K562 (cell line): ENCODE measurements at regions of chr2 and their contacts with region 1.

Region 1: GRCh38 chr2:85648619-85649018 is 19.4 kb downstream of the SFTPB start:
- DNase-seq: peak; percentile 41 to 63 (median 49)
- ATAC-seq: peak; percentile 80
- H3K4me3 ChIP-seq: no peak overlapping the region
- H3K27ac ChIP-seq: no peak overlapping the region
- H3K4me1 ChIP-seq: no peaks in the 10 kb centered on the region
- H3K27me3 ChIP-seq: no peaks in the 10 kb centered on the region
- CTCF ChIP-seq: peak; percentile 45 to 59 (median 49)
- EP300 ChIP-seq: no peak
- POLR2A ChIP-seq: no peak
- RAD21 ChIP-seq: peak in 1 of 2 experiments; percentile 37; a peak in 1 of 4 replicates

Region 2: DNA sequence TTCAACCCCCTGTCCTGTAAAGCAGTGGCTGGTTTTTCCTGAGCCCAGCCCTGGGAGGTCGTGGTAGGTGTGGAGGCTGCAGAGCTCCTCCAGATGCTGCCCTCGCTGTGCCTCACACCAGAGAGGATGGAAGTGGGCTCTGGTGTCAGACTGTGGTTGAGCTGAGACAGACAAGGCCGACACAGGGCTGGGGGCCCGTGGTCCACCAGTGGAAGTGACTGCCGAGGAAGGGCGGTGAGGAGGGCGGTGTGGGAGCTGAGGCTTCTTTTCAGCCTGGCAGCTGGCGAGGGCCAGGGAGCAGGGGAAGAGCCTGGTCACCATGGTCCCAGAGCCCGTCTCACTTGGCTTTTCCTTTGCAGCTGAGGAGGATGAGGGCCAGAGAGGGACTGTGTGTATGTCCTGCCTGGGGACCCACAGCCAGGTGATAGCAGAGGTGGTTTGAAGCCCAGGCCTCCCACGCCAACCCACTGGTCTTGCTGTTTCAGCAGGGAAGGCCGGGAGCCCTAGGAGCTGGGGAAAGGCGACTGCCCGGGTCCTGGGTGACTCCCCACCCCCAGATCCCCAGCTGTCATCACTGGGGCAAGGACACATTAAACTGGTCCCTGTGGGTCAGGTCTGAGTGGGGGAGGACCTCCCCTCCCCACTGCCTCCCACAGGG is 10.8 kb after region 1 on chr2:
- CTCF ChIA-PET with region 1: no interaction called
- POLR2A ChIA-PET with region 1: interaction called, 17 read pairs
- in situ Hi-C with region 1: no loop called
- intact Hi-C with region 1: no loop called
- DNase-seq: no peak
- ATAC-seq: no peak
- H3K4me3 ChIP-seq: no peak overlapping the region
- H3K27ac ChIP-seq: no peak overlapping the region
- H3K4me1 ChIP-seq: peaks cover 3 to 12% of the 10 kb centered on the region in 2 experiments; a peak in 3 of 5 replicates
- H3K27me3 ChIP-seq: no peaks in the 10 kb centered on the region
- CTCF ChIP-seq: no peak
- EP300 ChIP-seq: no peak
- POLR2A ChIP-seq: no peak
- RAD21 ChIP-seq: no peak

Region 3: DNA sequence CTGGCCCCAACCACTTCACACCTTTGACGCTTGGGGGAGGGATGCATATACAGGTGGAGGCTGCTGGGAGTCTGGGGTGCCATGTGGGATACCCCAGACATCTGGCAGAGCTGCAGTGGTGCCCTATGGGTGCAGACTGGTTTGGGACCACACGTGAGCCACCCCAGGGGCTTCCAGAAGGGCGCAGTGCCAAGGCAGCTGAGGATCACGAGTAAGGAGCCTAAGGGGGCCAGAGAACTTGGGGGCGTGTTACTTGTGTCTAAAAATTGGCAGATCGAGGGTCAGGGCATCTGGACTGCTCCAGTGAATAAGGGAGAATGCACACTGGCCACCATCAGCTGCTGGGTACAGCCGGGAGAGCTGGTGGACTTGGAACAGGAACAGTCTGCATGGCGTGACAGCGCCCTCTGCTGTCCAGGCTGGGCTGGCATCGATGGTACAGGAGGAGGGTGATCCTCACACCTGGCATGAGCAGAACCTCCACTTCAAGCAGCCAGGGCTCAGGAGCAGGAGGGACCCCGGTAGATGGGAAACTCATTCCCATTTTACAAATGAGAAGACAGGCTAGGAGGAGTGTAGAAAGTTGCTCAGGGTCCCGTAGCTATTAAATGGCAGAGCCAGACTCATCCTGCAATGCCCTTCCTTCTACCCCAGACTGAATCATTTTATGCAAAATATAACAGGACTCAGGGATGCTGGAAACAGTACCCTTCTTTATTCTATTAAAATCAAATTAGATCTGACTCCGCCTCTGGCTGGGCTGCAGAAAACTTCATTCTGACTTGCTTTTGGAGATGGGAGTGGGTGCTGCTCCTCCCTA is 165.6 kb after region 1 on chr2:
- CTCF ChIA-PET with region 1: no interaction called
- POLR2A ChIA-PET with region 1: no interaction called
- in situ Hi-C with region 1: no loop called
- intact Hi-C with region 1: no loop called
- DNase-seq: peak; percentile 80 to 84 (median 82)
- ATAC-seq: peak; percentile 96
- H3K4me3 ChIP-seq: no peak overlapping the region
- H3K27ac ChIP-seq: no peak overlapping the region
- H3K4me1 ChIP-seq: peaks cover 6 to 9% of the 10 kb centered on the region in 2 experiments; a peak in 4 of 5 replicates
- H3K27me3 ChIP-seq: peaks cover 20 to 54% of the 10 kb centered on the region in 2 experiments; a peak in 4 of 5 replicates
- CTCF ChIP-seq: peak; percentile 90 to 95 (median 93)
- EP300 ChIP-seq: no peak
- POLR2A ChIP-seq: no peak
- RAD21 ChIP-seq: peak; percentile 86 to 95